IMR-90 (cell line): ENCODE measurements at regions of chr16 and their contacts with region 1.

Region 1: DNA sequence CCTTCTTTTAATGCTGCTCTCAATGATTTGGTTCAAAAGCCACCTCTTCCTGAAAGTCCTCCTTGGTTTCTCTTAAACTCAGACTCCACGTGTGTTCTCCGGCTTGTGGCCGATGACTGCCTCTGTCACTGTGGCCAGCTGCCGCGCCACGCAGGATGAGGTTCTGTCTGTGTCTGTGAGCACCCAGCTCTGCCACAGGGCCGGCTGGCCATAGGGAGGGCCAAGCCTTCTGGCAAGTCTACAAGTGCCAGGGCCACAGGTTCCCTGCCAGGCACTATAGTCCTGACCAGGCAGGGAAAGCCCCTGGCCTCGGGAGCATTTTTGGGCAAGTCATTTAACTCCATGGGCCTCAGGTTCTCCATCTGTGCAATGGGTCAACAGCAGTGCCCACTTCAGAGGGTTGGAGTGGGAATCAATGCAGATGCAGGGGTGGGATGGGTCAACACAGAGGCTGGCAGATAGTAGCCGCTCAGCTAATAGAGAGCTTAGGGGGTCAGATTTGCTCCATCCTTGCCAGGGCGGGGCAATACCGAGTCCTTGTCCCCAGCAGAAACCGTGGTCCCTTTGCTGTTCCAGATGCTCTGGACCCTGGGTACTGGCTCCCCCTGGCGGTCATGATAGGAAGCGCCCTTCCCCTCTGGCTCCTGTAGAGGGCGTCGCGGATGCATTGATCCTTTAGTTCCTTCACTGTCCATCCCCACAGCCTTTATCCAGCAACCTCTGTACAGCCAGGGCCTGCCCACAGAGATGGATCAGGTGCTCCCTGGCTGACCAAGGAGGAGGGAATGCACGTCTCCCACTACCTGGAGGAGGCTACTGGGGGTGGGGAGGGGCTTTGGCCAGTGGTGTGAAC is 19.3 kb upstream of the ADGRG3 start:
- DNase-seq: peak; percentile 62
- ATAC-seq: peak; percentile 93
- H3K4me3 ChIP-seq: no peak overlapping the region
- H3K27ac ChIP-seq: no peak overlapping the region
- H3K4me1 ChIP-seq: peaks cover 2% of the 10 kb centered on the region; the same call in 1 of the 2 replicates
- H3K27me3 ChIP-seq: no peaks in the 10 kb centered on the region
- CTCF ChIP-seq: peak; percentile 100; the same call in 1 of the 2 replicates
- POLR2A ChIP-seq: peak; percentile 67
- RAD21 ChIP-seq: peak; percentile 99

Region 2: DNA sequence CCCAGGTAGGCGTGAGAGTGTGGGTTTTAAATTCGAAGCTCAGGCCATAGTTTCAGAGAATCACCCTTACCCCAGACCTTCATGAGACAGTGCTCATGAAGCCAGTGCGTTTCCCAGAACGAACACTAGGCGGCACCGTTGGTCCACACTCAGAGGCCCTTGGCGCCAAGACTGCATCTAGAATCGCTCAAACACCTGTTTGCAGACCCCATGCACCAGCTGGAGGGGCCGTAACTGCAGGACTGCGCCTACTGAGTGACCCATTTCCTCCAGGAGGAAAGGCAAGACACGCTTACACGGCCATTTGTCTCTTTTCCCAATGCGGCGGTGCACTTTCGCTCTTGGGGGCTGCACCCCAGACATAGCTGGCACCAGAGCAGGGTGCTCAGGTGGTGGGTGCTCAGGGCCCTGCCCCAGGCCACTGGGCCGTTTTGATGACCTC is 72.4 kb before region 1 on chr16:
- CTCF ChIA-PET with region 1: interaction called, 3 read pairs
- POLR2A ChIA-PET with region 1: no interaction called
- dilution Hi-C with region 1: no loop called
- in situ Hi-C with region 1: no loop called
- intact Hi-C with region 1: loop called (anchors 1 kb)
- DNase-seq: peak; percentile 55
- ATAC-seq: peak; percentile 98
- H3K4me3 ChIP-seq: no peak overlapping the region
- H3K27ac ChIP-seq: no peak overlapping the region
- H3K4me1 ChIP-seq: no peaks in the 10 kb centered on the region
- H3K27me3 ChIP-seq: peaks cover 19% of the 10 kb centered on the region; the same call in 1 of the 2 replicates
- CTCF ChIP-seq: peak; percentile 96
- POLR2A ChIP-seq: peak; percentile 44; the same call in 1 of the 2 replicates
- RAD21 ChIP-seq: peak; percentile 97

Region 3: GRCh38 chr16:57591086-57591869 is 57.5 kb before region 1 on chr16:
- CTCF ChIA-PET with region 1: interaction called, 16 read pairs
- POLR2A ChIA-PET with region 1: no interaction called
- dilution Hi-C with region 1: no loop called
- in situ Hi-C with region 1: no loop called
- intact Hi-C with region 1: loop called (anchors 1 kb)
- DNase-seq: peak; percentile 82
- ATAC-seq: peak; percentile 93
- H3K4me3 ChIP-seq: no peak overlapping the region
- H3K27ac ChIP-seq: peak overlapping the region; percentile 2; the same call in 1 of the 2 replicates
- H3K4me1 ChIP-seq: peaks cover 8% of the 10 kb centered on the region
- H3K27me3 ChIP-seq: 0 out of 2 replicates have a peak, but pooled peaks cover 3% of the 10 kb centered on the region
- CTCF ChIP-seq: peak; percentile 93
- POLR2A ChIP-seq: no peak
- RAD21 ChIP-seq: peak; percentile 83

Region 4: GRCh38 chr16:57600048-57600835 is 48.6 kb before region 1 on chr16:
- CTCF ChIA-PET with region 1: interaction called, 4 read pairs
- POLR2A ChIA-PET with region 1: no interaction called
- dilution Hi-C with region 1: no loop called
- in situ Hi-C with region 1: loop called (anchors 5 kb)
- intact Hi-C with region 1: loop called (anchors 2 kb)
- DNase-seq: peak; percentile 32
- ATAC-seq: peak; percentile 85
- H3K4me3 ChIP-seq: no peak overlapping the region
- H3K27ac ChIP-seq: no peak overlapping the region
- H3K4me1 ChIP-seq: no peaks in the 10 kb centered on the region
- H3K27me3 ChIP-seq: peaks cover 28% of the 10 kb centered on the region
- CTCF ChIP-seq: peak; percentile 63
- POLR2A ChIP-seq: no peak
- RAD21 ChIP-seq: peak; percentile 71

Region 5: GRCh38 chr16:57720142-57720575 is 71.3 kb after region 1 on chr16:
- CTCF ChIA-PET with region 1: no interaction called
- POLR2A ChIA-PET with region 1: no interaction called
- dilution Hi-C with region 1: no loop called
- in situ Hi-C with region 1: no loop called
- intact Hi-C with region 1: loop called (anchors 1 kb)
- DNase-seq: peak; percentile 50
- ATAC-seq: peak; percentile 97
- H3K4me3 ChIP-seq: no peak overlapping the region
- H3K27ac ChIP-seq: no peak overlapping the region
- H3K4me1 ChIP-seq: no peaks in the 10 kb centered on the region
- H3K27me3 ChIP-seq: peaks cover 32% of the 10 kb centered on the region
- CTCF ChIP-seq: peak; percentile 67
- POLR2A ChIP-seq: no peak
- RAD21 ChIP-seq: peak; percentile 62